ENCODE measurements at regions of chr9 and their contacts with region 1.

Region 1: GRCh38 chr9:127715394-127716337 is at the starts of genes PTRH1 and TTC16:
- DNase-seq: peak; percentile 84 to 99
- H3K4me3 ChIP-seq: peak within 1 kb of the TSS; percentile 61 to 93
- H3K27ac ChIP-seq: peak within 1 kb of the TSS; percentile 82 to 85
- H3K4me1 ChIP-seq: peaks cover 0 to 10% of the 10 kb centered on the region in 2 donors
- H3K27me3 ChIP-seq: no peaks in the 10 kb centered on the region
- CTCF ChIP-seq: no peak
- total RNA-seq, gene PTRH1: 5.4 TPM
- total RNA-seq, gene TTC16: not detected

Region 2: DNA sequence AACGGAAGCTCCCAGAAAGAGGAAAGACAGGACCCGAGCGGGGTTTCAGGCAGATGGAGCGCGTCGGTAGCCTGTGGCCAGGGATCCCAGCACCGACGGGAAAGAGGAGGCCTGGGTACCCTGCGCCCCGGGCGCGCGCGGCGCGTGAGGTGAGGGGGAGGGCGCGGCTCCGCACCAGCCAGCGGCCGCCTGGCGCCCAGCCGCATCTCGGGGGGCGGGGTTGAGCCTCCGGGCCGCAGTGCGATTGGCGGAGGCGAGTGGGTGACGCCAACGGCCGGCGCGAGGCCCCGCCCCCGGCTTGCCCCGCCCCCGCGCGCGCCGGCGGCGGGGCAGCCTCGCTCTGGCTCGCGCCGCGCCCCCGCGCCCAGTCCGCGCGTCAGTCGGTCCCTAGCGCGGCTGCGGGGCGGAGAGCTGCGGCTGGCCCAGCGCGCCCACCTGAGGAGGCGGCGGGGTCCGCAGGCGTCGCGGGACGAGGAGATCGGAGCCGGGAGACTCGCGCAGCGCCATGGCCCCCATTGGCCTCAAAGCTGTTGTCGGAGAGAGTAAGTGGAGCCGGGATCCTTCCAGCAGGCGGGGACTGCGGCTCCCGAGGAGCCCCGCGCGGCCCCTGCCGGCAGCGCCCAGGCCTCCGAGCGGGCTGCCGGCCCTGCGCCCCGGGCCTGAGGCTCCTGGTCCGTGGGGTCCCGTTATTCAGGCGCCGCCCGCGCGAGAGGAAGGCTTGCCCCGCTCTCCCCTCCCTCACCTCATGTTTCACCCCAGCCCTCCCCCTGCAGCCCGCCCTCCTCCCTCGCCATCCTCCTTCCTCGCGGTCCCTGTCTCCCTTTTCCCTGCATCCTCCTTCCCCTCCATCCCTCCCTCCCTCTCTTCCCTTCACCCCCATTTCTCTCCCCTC is 103.5 kb before region 1 on chr9 and contains the start of gene STXBP1:
- intact Hi-C with region 1: loop called (anchors 5 kb)
- DNase-seq: peak; percentile 29 to 89
- H3K4me3 ChIP-seq: peak within 1 kb of the TSS; percentile 76 to 95
- H3K27ac ChIP-seq: peak within 1 kb of the TSS; percentile 71 to 77
- H3K4me1 ChIP-seq: peaks cover 0 to 16% of the 10 kb centered on the region in 2 donors
- H3K27me3 ChIP-seq: no peaks in the 10 kb centered on the region
- CTCF ChIP-seq: peak in 2 of 3 experiments; percentile 9 to 13
- total RNA-seq, gene STXBP1: 29.3 TPM

Region 3: GRCh38 chr9:127698985-127699670 is 16.5 kb before region 1 on chr9:
- intact Hi-C with region 1: loop called (anchors 1 kb)
- DNase-seq: peak; percentile 93 to 98
- H3K4me3 ChIP-seq: peak overlapping the region; percentile 32 to 48
- H3K27ac ChIP-seq: peak overlapping the region; percentile 79 to 92
- H3K4me1 ChIP-seq: no peaks in the 10 kb centered on the region
- H3K27me3 ChIP-seq: no peaks in the 10 kb centered on the region
- CTCF ChIP-seq: peak; percentile 9 to 41 (median 25)

Region 4: DNA sequence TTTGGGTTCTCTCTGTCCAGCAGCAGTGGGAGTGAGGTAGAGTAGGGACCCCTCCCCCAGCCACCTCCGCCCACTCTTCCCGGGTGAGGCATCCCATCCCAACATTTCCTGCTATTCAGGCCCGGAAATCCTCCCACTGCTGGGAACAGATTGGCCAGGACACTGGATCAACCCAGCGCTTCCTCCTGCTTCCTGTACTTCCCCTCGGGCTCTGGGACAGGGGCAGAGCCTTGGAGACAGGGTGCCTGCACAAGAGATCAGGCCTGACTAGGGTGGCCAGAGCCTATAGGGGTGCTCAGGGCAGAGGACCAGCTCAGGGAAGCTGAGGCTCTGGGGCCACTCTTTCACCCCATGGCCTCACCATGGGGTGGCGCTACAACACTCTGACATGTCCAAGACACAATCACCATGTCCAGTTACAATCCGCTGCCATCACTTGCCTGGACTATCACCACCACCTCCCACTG is 48.3 kb after region 1 on chr9:
- intact Hi-C with region 1: no loop called
- DNase-seq: no peak
- H3K4me3 ChIP-seq: no peak overlapping the region
- H3K27ac ChIP-seq: peak overlapping the region in 1 of 2 donors; percentile 63
- H3K4me1 ChIP-seq: no peaks in the 10 kb centered on the region
- H3K27me3 ChIP-seq: no peaks in the 10 kb centered on the region
- CTCF ChIP-seq: peak in 1 of 3 experiments; percentile 25